ENCODE measurements at regions of chr4 and their contacts with region 1.

Region 1: GRCh38 chr4:20422398-20422797 is 170.7 kb downstream of the SLIT2 start:
- DNase-seq: peak in 1 of 2 donors; percentile 65
- H3K4me3 ChIP-seq: no peak overlapping the region
- H3K27ac ChIP-seq: no peak overlapping the region
- H3K4me1 ChIP-seq: no peaks in the 10 kb centered on the region
- H3K27me3 ChIP-seq: no peaks in the 10 kb centered on the region
- CTCF ChIP-seq: peak; percentile 12 to 41 (median 34)

Region 2: GRCh38 chr4:20544645-20545044 is 122.2 kb after region 1 on chr4:
- intact Hi-C with region 1: loop called (anchors 5 kb)
- DNase-seq: no peak
- H3K4me3 ChIP-seq: no peak overlapping the region
- H3K27ac ChIP-seq: no peak overlapping the region
- H3K4me1 ChIP-seq: no peaks in the 10 kb centered on the region
- H3K27me3 ChIP-seq: no peaks in the 10 kb centered on the region
- CTCF ChIP-seq: peak; percentile 30 to 52 (median 30)

Region 3: GRCh38 chr4:20684852-20685763 is 262.7 kb after region 1 on chr4:
- intact Hi-C with region 1: loop called (anchors 5 kb)
- DNase-seq: no peak
- H3K4me3 ChIP-seq: no peak overlapping the region
- H3K27ac ChIP-seq: no peak overlapping the region
- H3K4me1 ChIP-seq: no peaks in the 10 kb centered on the region
- H3K27me3 ChIP-seq: no peaks in the 10 kb centered on the region
- CTCF ChIP-seq: peak; percentile 33 to 66 (median 47)

Region 4: GRCh38 chr4:21656832-21657231 is 1234.4 kb after region 1 on chr4:
- intact Hi-C with region 1: no loop called
- DNase-seq: no peak
- H3K4me3 ChIP-seq: no peak overlapping the region
- H3K27ac ChIP-seq: no peak overlapping the region
- H3K4me1 ChIP-seq: no peaks in the 10 kb centered on the region
- H3K27me3 ChIP-seq: no peaks in the 10 kb centered on the region
- CTCF ChIP-seq: no peak